ENCODE measurements at regions of chr1 and their contacts with region 1.

Region 1: DNA sequence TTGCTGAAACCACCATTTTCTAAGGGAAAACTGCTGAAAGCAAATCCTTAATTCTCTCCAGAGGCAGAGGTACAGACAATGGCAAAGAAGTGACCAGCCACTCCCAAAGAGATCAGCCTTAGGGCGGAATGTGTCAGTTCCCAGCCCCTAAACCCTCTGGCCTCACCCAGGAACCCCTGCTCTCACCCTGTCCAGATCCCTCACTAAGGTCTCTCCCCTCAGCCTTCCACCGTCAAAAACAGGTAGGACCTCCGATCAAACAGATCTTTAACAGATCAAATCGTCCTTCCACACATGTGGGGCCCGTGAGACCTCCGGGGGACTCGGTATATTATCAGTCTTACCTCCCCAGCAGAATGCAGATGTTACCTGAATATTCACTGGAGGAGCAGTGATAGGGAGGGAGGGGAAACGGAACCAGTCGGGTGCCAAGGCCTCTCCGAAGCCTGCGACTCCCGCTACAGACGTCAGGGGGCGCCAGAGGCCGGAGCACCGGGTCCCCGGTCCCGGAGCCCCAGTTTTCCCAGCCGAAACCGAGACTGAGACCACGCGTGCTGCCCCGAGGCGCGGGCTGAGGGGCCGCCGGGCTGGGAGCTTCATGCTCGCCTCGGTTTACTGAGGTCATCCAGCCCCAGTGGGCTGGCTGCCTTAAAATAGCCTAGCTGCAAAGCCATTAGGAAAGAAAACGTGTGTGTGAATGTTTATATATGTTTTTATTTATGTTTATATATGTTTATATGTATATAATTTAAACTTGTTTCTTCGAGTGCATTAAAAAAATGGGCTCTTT is 23.6 kb downstream of the GPA33 start:
- DNase-seq: peak in 1 of 2 donors; percentile 76
- H3K4me3 ChIP-seq: peak overlapping the region; percentile 36 to 44
- H3K27ac ChIP-seq: no peak overlapping the region
- H3K4me1 ChIP-seq: peaks cover 0 to 2% of the 10 kb centered on the region in 2 donors
- H3K27me3 ChIP-seq: no peaks in the 10 kb centered on the region
- CTCF ChIP-seq: peak; percentile 86 to 97 (median 88)

Region 2: GRCh38 chr1:166766934-166767333 is 299.6 kb before region 1 on chr1:
- intact Hi-C with region 1: no loop called
- DNase-seq: no peak
- H3K4me3 ChIP-seq: no peak overlapping the region
- H3K27ac ChIP-seq: no peak overlapping the region
- H3K4me1 ChIP-seq: no peaks in the 10 kb centered on the region
- H3K27me3 ChIP-seq: no peaks in the 10 kb centered on the region
- CTCF ChIP-seq: no peak

Region 3: DNA sequence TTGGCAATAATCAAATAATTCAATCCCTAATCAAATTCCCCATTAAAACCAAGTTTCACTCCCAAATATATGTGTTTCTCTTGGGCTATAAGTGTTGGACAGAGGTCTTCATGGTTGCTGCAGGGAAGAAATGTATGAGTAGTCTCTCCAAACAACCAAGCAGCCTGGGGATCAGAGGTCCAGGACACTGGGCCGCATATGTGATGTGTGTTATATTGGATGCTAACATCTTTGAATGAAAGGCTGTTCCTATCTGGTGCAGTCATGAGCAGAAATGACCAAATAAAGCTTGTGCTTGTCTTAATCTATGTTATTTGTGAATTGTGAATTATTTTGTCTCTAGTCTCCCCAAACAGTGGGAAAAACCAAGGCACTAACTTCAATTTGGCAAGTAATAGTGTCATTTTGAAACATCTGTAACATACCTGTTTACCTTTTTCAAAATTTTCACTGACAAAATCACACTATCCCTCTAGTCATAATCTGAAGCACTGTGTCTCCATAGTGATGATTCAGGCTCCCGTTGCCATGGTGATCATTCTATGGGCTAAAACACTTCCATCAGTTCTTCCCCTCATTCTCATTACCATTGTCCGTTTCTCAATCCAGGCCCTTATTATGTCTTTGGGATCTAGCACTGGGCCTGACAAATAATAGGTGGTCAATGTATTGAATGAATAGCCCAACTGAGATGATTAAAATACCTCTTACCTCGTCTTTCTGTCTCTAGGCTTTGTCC is 178.0 kb before region 1 on chr1:
- intact Hi-C with region 1: no loop called
- DNase-seq: no peak
- H3K4me3 ChIP-seq: no peak overlapping the region
- H3K27ac ChIP-seq: no peak overlapping the region
- H3K4me1 ChIP-seq: peaks cover 0 to 3% of the 10 kb centered on the region in 2 donors
- H3K27me3 ChIP-seq: peaks cover 3% of the 10 kb centered on the region
- CTCF ChIP-seq: no peak

Region 4: GRCh38 chr1:167033646-167034045 is 32.9 kb before region 1 on chr1:
- intact Hi-C with region 1: no loop called
- DNase-seq: no peak
- H3K4me3 ChIP-seq: no peak overlapping the region
- H3K27ac ChIP-seq: no peak overlapping the region
- H3K4me1 ChIP-seq: no peaks in the 10 kb centered on the region
- H3K27me3 ChIP-seq: no peaks in the 10 kb centered on the region
- CTCF ChIP-seq: no peak

Region 5: DNA sequence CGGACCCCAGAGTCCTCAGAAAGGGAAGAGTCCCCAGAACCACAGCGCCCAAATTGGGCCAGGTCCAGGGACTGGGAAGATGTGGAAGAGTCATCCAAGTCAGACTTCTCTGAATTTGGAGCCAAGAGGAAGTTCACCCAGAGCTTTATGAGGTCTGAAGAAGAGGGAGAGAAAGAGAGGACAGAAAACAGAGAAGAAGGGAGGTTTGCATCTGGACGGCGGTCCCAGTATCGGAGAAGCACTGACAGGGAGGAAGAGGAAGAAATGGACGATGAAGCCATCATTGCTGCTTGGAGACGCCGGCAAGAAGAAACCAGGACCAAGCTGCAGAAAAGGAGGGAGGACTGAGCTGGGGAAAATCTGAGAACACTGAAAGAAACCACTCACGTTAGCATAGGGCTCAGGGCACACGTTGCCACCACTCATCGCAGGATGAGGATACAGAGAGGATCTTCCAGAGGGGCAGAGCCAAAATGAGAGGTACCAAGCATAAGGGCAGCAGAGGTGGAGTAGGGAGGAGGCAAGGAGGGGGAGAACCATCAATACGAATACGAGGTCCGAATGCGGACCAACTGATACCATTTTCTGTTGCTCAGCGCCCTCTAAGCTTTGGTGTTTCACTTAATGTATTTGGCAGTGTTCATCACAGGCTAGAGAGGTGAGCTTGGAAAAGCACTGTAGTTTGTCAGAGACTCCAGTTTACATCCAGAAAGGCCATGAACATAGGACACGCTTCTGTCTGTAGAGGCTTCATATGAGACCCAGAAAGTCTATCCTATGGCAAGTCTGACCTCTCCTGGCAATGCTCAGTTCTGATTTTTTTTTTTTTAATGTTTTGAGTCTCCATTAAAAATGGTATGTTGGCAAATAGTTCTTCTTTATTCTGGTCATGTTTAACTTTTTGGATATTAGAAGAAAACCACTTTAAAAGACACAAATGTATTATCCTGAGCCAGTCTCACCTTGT is 62.0 kb after region 1 on chr1:
- intact Hi-C with region 1: loop called (anchors 5 kb)
- DNase-seq: no peak
- H3K4me3 ChIP-seq: no peak overlapping the region
- H3K27ac ChIP-seq: no peak overlapping the region
- H3K4me1 ChIP-seq: no peaks in the 10 kb centered on the region
- H3K27me3 ChIP-seq: no peaks in the 10 kb centered on the region
- CTCF ChIP-seq: no peak

Region 6: GRCh38 chr1:167220537-167221125 is 154.1 kb after region 1 on chr1 and contains the start of gene POU2F1:
- intact Hi-C with region 1: loop called (anchors 5 kb)
- DNase-seq: peak; percentile 93 to 99
- H3K4me3 ChIP-seq: peak within 1 kb of the TSS; percentile 75 to 97
- H3K27ac ChIP-seq: peak within 1 kb of the TSS; percentile 93 to 98
- H3K4me1 ChIP-seq: peaks cover 0 to 7% of the 10 kb centered on the region in 2 donors
- H3K27me3 ChIP-seq: no peaks in the 10 kb centered on the region
- CTCF ChIP-seq: peak; percentile 70 to 77 (median 71)
- total RNA-seq, gene POU2F1: 3.0 TPM

Region 7: DNA sequence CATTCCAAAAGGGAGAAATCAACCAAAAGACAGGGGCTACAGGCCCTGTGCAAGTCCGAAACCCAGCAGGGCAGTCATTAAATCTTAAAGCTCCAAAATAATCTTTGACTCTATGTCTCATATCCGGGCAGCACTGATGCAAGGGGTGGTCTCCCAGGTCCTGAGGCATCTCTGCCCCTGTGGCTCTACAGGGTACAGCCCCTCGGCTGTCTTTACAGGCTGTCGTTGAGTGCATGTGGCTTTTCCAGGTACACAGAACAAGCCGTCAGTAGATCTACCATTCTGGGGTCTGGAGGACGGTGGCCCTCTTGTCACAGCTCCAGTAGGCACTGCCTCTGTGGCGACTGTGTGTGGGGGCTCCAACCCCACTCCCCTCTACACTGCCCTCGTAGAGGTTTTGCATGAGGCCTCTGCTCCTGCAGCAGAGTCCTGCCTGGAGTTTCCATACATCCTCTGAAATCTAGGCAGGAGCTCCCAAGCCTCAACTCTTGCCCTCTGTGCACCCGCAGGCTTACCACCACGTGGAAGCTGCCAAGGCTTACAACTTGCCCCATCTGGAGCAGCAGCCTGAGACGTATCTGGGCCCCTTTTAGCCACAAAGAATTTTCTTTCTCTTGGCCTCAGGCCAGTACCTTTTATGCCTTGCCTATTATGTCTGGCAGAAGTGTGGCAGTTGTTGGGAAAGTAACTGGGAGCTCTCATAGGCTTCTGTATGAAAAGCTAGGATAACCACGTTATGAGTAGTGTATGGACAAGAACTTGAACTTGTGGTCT is 206.7 kb after region 1 on chr1:
- intact Hi-C with region 1: loop called (anchors 5 kb)
- DNase-seq: no peak
- H3K4me3 ChIP-seq: no peak overlapping the region
- H3K27ac ChIP-seq: no peak overlapping the region
- H3K4me1 ChIP-seq: peaks cover 3 to 19% of the 10 kb centered on the region in 2 donors
- H3K27me3 ChIP-seq: no peaks in the 10 kb centered on the region
- CTCF ChIP-seq: no peak

Region 8: GRCh38 chr1:167442124-167442848 is 375.8 kb after region 1 on chr1:
- intact Hi-C with region 1: loop called (anchors 1 kb)
- DNase-seq: peak in 1 of 2 donors; percentile 87
- H3K4me3 ChIP-seq: no peak overlapping the region
- H3K27ac ChIP-seq: no peak overlapping the region
- H3K4me1 ChIP-seq: peaks cover 4 to 6% of the 10 kb centered on the region in 2 donors
- H3K27me3 ChIP-seq: no peaks in the 10 kb centered on the region
- CTCF ChIP-seq: peak; percentile 59 to 88 (median 79)

Region 9: DNA sequence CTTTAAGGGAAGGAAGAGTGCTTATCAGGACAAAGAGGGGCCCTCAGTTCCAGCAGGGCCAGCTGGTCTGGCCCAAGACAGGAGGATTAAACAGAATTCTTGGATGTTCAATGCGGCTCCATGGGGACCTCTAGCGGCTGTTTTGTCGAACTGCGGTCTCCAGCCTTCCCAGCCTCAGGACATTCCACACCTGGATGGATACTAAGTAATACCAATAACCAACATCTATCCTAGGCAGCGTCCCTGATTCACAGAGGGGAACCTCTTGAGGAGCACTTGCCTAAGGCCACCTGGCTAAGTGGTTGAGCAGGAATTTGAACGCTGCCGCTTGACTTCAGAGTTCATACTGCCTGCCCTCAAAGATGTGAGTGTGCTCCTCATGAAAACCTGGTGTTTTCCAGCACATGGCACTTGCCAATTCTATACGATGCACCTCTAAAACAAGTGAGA is 467.3 kb after region 1 on chr1:
- intact Hi-C with region 1: loop called (anchors 2 kb)
- DNase-seq: peak in 1 of 2 donors; percentile 79
- H3K4me3 ChIP-seq: no peak overlapping the region
- H3K27ac ChIP-seq: no peak overlapping the region
- H3K4me1 ChIP-seq: no peaks in the 10 kb centered on the region
- H3K27me3 ChIP-seq: no peaks in the 10 kb centered on the region
- CTCF ChIP-seq: peak; percentile 60 to 92 (median 90)

Region 10: DNA sequence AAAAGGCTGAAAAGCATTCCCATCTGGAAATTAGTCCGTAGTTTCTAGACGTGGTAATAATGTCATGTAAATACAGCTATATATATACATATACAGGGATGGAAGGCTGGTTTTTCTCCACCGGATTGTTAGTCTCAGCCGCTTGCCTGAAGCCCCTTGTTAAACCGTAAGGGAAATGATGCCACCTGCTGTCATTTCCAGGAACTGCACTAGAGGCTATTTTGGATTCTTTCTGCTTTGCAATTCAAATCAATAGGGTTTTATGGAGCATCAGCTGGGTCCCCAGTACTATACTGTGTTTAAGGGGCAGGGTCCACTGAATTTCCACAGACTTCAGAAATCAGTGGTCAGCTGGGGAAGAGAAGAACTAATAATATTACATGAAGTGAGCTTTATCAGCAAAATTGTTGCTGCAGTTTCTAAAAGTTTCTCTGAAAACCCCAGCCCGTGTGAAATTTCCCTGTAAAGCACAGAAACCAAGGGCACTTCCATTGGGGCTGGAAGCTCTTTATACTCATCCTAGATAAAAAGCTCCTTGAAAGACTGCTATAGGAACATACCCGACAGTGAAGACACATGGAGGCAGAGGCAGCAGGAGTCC is 621.5 kb after region 1 on chr1:
- intact Hi-C with region 1: loop called (anchors 5 kb)
- DNase-seq: peak in 1 of 2 donors; percentile 91
- H3K4me3 ChIP-seq: no peak overlapping the region
- H3K27ac ChIP-seq: no peak overlapping the region
- H3K4me1 ChIP-seq: peaks cover 7 to 12% of the 10 kb centered on the region in 2 donors
- H3K27me3 ChIP-seq: no peaks in the 10 kb centered on the region
- CTCF ChIP-seq: peak; percentile 80 to 94 (median 94)

Region 11: GRCh38 chr1:168428063-168428731 is 1361.7 kb after region 1 on chr1:
- intact Hi-C with region 1: no loop called
- DNase-seq: peak in 1 of 2 donors; percentile 69
- H3K4me3 ChIP-seq: no peak overlapping the region
- H3K27ac ChIP-seq: peak overlapping the region; percentile 44 to 62
- H3K4me1 ChIP-seq: peaks cover 8 to 15% of the 10 kb centered on the region in 2 donors
- H3K27me3 ChIP-seq: no peaks in the 10 kb centered on the region
- CTCF ChIP-seq: no peak